Tibial artery (tissue), 4 donors: ENCODE measurements at regions of chr15 and their contacts with region 1.

Region 1: DNA sequence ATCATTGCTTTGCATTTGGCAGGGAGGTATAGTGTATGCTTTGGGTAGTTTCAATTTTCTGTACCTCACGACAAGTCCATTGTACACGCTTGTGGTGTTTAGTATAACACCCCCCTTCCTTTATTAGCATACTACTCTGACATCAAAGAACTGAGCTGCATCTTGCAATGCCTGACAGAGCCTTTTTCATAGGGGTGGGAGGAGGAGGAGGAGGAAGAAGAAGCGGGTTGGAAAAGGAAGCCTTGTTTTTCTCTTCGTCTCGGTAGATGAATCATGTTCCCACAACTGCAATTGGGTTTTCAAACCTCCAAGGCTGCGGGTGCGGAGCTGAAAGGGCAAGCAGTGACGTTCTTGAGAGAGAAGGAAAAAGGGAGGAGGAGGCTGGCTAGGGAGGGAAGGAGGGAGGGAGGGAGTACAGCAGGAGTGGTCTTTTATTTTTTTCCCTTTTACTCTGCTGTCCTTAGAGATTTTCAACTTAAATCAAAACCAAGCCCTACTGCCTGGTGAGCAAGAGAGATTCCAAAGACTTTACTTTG is 175.7 kb downstream of the KLHL25 start:
- DNase-seq: peak; percentile 92
- H3K4me3 ChIP-seq: peak overlapping the region; percentile 59 to 61
- H3K27ac ChIP-seq: peak overlapping the region; percentile 83 to 85
- H3K4me1 ChIP-seq: peaks cover 0 to 77% (median 33%) of the 10 kb centered on the region in 4 donors
- H3K27me3 ChIP-seq: no peaks in the 10 kb centered on the region
- CTCF ChIP-seq: no peak

Region 2: GRCh38 chr15:85730001-85730820 is 111.2 kb after region 1 on chr15:
- intact Hi-C with region 1: loop called (anchors 10 kb)
- DNase-seq: peak in 1 of 2 donors; percentile 45
- H3K4me3 ChIP-seq: no peak overlapping the region
- H3K27ac ChIP-seq: peak overlapping the region; percentile 50 to 84
- H3K4me1 ChIP-seq: peaks cover 0 to 28% (median 20%) of the 10 kb centered on the region in 4 donors
- H3K27me3 ChIP-seq: no peaks in the 10 kb centered on the region
- CTCF ChIP-seq: peak; percentile 76 to 78

Region 3: GRCh38 chr15:87021751-87022150 is 1402.7 kb after region 1 on chr15:
- intact Hi-C with region 1: no loop called
- DNase-seq: no peak
- H3K4me3 ChIP-seq: no peak overlapping the region
- H3K27ac ChIP-seq: no peak overlapping the region
- H3K4me1 ChIP-seq: no peaks in the 10 kb centered on the region
- H3K27me3 ChIP-seq: no peaks in the 10 kb centered on the region
- CTCF ChIP-seq: no peak